Esophagus muscularis mucosa (tissue), 4 donors: ENCODE measurements at regions of chr17 and their contacts with region 1.

Region 1: GRCh38 chr17:82648166-82648668 is at the start of gene WDR45B:
- DNase-seq: peak; percentile 98
- H3K4me3 ChIP-seq: peak within 1 kb of the TSS; percentile 77 to 98 (median 95)
- H3K27ac ChIP-seq: peak within 1 kb of the TSS; percentile 98 to 99 (median 98)
- H3K4me1 ChIP-seq: peaks cover 25 to 40% (median 32%) of the 10 kb centered on the region in 4 donors
- H3K27me3 ChIP-seq: no peaks in the 10 kb centered on the region
- CTCF ChIP-seq: no peak
- EP300 ChIP-seq: peak; percentile 94
- POLR2A ChIP-seq: peak; percentile 97
- total RNA-seq, gene WDR45B: 57.3 to 81.4 (median 74.4) TPM

Region 2: DNA sequence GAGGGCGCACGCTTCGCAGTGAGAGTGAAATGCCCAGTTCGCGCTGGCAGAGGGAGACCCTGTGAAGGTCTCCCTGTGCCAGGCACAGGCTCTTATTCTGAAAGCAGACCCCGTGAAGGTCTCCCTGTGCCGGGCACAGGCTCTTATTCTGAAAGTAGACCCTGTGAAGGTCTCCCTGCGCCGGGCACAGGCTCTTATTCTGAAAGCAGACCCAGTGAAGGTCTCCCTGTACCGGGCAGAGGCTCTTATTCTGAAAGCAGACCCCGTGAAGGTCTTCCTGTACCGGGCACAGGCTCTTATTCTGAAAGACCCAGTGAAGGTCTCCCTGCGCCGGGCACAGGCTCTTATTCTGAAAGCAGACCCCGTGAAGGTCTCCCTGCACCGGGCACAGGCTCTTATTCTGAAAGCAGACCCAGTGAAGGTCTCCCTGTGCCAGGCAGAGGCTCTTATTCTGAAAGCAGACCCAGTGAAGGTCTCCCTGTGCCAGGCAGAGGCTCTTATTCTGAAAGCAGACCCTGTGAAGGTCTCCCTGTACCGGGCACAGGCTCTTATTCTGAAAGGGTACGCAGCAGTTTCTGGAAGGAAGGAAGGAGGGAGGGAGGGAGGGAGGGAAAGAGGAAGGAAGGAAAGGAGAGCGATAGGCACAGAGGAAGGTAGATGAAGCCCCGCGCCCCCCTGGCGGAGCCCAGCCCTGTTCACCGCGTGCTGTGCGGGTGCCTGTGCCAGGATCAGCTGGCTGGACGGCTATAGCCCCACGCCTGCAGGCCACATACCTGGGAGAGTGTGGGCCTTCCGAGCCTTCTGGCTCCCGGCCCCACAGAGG is 55.2 kb before region 1 on chr17:
- intact Hi-C with region 1: loop called (anchors 5 kb)
- DNase-seq: no peak
- H3K4me3 ChIP-seq: peak overlapping the region; percentile 55 to 80 (median 64)
- H3K27ac ChIP-seq: peak overlapping the region; percentile 87 to 96 (median 89)
- H3K4me1 ChIP-seq: peaks cover 36 to 54% (median 45%) of the 10 kb centered on the region in 4 donors
- H3K27me3 ChIP-seq: no peaks in the 10 kb centered on the region
- CTCF ChIP-seq: no peak
- EP300 ChIP-seq: no peak
- POLR2A ChIP-seq: no peak

Region 3: GRCh38 chr17:82740906-82741759 is 92.9 kb after region 1 on chr17:
- intact Hi-C with region 1: no loop called
- DNase-seq: no peak
- H3K4me3 ChIP-seq: no peak overlapping the region
- H3K27ac ChIP-seq: no peak overlapping the region
- H3K4me1 ChIP-seq: peaks cover 3 to 19% (median 17%) of the 10 kb centered on the region in 4 donors
- H3K27me3 ChIP-seq: no peaks in the 10 kb centered on the region
- CTCF ChIP-seq: no peak
- EP300 ChIP-seq: no peak
- POLR2A ChIP-seq: no peak

Region 4: GRCh38 chr17:82751571-82752370 is 103.6 kb after region 1 on chr17 and contains the start of gene TBCD:
- intact Hi-C with region 1: loop called (anchors 5 kb)
- DNase-seq: peak; percentile 96
- H3K4me3 ChIP-seq: peak within 1 kb of the TSS; percentile 93 to 96 (median 94)
- H3K27ac ChIP-seq: peak within 1 kb of the TSS; percentile 90 to 93 (median 92)
- H3K4me1 ChIP-seq: peaks cover 12 to 29% (median 21%) of the 10 kb centered on the region in 4 donors
- H3K27me3 ChIP-seq: peaks cover 0 to 4% (median 0%) of the 10 kb centered on the region in 4 donors
- CTCF ChIP-seq: no peak
- EP300 ChIP-seq: no peak
- POLR2A ChIP-seq: peak; percentile 10
- total RNA-seq, gene TBCD: 38.1 to 56.7 (median 53.6) TPM